Ovary (tissue), 10 donors: ENCODE measurements at regions of chr16 and their contacts with region 1.

Region 1: DNA sequence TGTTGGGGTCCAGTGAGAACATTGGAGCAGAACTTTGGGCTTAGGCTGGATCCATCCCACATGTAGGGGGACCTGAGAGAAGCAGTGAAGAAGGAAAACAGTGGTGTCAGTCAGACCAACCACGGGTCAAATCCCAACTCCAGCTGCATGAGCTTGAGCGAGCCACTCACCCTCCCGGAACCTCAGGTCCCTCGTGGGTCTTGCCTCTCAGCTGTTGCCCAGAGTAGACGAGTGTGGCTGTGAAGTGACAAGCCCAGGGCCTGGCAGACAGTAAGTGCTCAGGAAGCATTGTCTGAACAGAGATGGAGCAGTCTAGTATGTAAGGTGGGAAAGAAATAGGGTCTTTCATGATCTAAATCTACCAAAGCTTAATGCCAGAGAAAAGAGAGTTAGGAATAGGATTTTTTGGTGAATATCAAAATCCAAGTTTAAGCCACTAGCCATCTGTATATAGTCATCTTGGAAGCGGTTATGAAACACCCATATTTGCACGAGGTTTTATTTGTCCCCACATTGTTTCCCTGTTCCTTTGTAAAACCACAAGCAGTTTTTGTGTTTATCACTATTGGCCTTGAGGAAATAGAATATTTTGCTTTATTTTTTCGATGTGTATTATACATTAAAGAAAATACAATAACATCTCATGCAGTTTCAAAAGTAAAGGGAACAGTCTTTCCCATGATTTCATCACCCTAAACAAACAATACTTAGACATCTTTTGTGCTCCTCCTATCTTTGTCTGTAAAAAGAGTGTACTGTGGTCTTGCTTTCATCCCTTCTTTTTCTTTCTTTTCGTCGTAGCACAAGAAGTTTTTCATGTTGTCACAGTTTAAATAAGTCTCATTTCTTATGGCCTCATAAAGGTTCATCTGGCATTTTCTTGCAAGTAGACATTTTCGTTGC is 112.0 kb downstream of the CLEC16A start:
- DNase-seq: peak in 1 of 5 donors; percentile 13
- H3K4me3 ChIP-seq: no peak overlapping the region
- H3K27ac ChIP-seq: peak overlapping the region in 1 of 2 donors; percentile 31
- H3K4me1 ChIP-seq: peaks cover 10% of the 10 kb centered on the region
- H3K27me3 ChIP-seq: no peaks in the 10 kb centered on the region
- CTCF ChIP-seq: no peak
- EP300 ChIP-seq: no peak
- POLR2A ChIP-seq: no peak

Region 2: GRCh38 chr16:11105038-11105903 is 48.9 kb after region 1 on chr16:
- intact Hi-C with region 1: loop called in 1 of 4 experiments (anchors 5 kb)
- DNase-seq: peak in 1 of 5 donors; percentile 46
- H3K4me3 ChIP-seq: no peak overlapping the region
- H3K27ac ChIP-seq: no peak overlapping the region
- H3K4me1 ChIP-seq: peaks cover 11% of the 10 kb centered on the region
- H3K27me3 ChIP-seq: no peaks in the 10 kb centered on the region
- CTCF ChIP-seq: no peak
- EP300 ChIP-seq: peak; percentile 69
- POLR2A ChIP-seq: peak; percentile 26

Region 3: GRCh38 chr16:11121914-11122692 is 65.8 kb after region 1 on chr16:
- intact Hi-C with region 1: no loop called
- DNase-seq: peak in 1 of 5 donors; percentile 3
- H3K4me3 ChIP-seq: no peak overlapping the region
- H3K27ac ChIP-seq: no peak overlapping the region
- H3K4me1 ChIP-seq: no peaks in the 10 kb centered on the region
- H3K27me3 ChIP-seq: no peaks in the 10 kb centered on the region
- CTCF ChIP-seq: no peak
- EP300 ChIP-seq: no peak
- POLR2A ChIP-seq: no peak